Sigmoid colon (tissue), 7 donors: ENCODE measurements at regions of chr1 and their contacts with region 1.

Region 1: GRCh38 chr1:6275826-6276782 is 15.2 kb upstream of the GPR153 start:
- DNase-seq: peak; percentile 93
- H3K4me3 ChIP-seq: peak overlapping the region in 2 of 4 donors; percentile 2 to 17
- H3K27ac ChIP-seq: peak overlapping the region; percentile 69 to 83 (median 74)
- H3K4me1 ChIP-seq: peaks cover 0 to 37% (median 28%) of the 10 kb centered on the region in 4 donors
- H3K27me3 ChIP-seq: no peaks in the 10 kb centered on the region
- CTCF ChIP-seq: no peak
- EP300 ChIP-seq: peak in 1 of 4 donors; percentile 88
- POLR2A ChIP-seq: no peak

Region 2: GRCh38 chr1:6224718-6225117 is 51.4 kb before region 1 on chr1:
- intact Hi-C with region 1: no loop called
- DNase-seq: no peak
- H3K4me3 ChIP-seq: no peak overlapping the region
- H3K27ac ChIP-seq: no peak overlapping the region
- H3K4me1 ChIP-seq: no peaks in the 10 kb centered on the region
- H3K27me3 ChIP-seq: no peaks in the 10 kb centered on the region
- CTCF ChIP-seq: no peak
- EP300 ChIP-seq: no peak
- POLR2A ChIP-seq: no peak

Region 3: DNA sequence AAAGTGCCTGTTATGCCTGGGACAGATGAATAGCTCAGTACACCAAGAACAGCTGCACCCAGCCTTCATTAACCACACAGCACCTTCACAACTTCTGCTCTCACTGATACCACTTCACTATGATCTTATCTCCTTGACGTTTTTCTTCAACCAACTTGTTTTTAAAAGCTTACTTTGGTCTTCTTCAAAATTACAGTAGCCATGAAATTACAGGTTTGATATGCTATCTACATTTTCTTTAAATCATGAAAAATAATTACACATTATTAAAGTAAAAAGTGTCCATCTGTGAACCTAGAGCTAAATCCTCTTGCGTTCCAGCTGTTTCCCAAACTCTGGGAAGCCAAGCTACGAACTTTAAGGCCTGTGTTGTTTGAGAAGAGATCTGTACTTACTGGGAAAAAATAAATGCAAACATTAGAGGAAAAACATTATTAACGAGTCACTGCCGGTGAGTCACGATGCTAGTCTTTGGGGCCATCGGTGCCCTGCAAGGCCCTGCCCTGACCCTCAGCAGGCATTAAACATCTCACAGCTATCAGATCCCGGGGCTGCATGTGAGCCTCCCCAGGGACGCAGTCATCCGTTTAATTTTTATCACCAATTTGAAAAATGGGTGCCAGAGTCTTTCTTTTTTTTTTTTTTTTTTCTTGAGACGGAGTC is 41.1 kb after region 1 on chr1:
- intact Hi-C with region 1: no loop called
- DNase-seq: no peak
- H3K4me3 ChIP-seq: no peak overlapping the region
- H3K27ac ChIP-seq: no peak overlapping the region
- H3K4me1 ChIP-seq: no peaks in the 10 kb centered on the region
- H3K27me3 ChIP-seq: no peaks in the 10 kb centered on the region
- CTCF ChIP-seq: no peak
- EP300 ChIP-seq: no peak
- POLR2A ChIP-seq: no peak

Region 4: GRCh38 chr1:6329851-6330250 is 53.7 kb after region 1 on chr1:
- intact Hi-C with region 1: loop called (anchors 5 kb)
- DNase-seq: no peak
- H3K4me3 ChIP-seq: no peak overlapping the region
- H3K27ac ChIP-seq: peak overlapping the region in 3 of 4 donors; percentile 66 to 78 (median 71)
- H3K4me1 ChIP-seq: peaks cover 0 to 27% (median 25%) of the 10 kb centered on the region in 4 donors
- H3K27me3 ChIP-seq: no peaks in the 10 kb centered on the region
- CTCF ChIP-seq: no peak
- EP300 ChIP-seq: no peak
- POLR2A ChIP-seq: no peak